SK-N-SH (cell line): ENCODE measurements at regions of chr7 and their contacts with region 1.

Region 1: GRCh38 chr7:73726083-73726466 is 6.6 kb upstream of the STX1A start:
- DNase-seq: no peak
- H3K4me3 ChIP-seq: no peak overlapping the region
- H3K27ac ChIP-seq: no peak overlapping the region
- H3K4me1 ChIP-seq: peaks cover 5 to 8% of the 10 kb centered on the region in 2 experiments; a peak in 2 of 4 replicates
- H3K27me3 ChIP-seq: no peaks in the 10 kb centered on the region
- CTCF ChIP-seq: no peak
- EP300 ChIP-seq: no peak
- RAD21 ChIP-seq: no peak

Region 2: DNA sequence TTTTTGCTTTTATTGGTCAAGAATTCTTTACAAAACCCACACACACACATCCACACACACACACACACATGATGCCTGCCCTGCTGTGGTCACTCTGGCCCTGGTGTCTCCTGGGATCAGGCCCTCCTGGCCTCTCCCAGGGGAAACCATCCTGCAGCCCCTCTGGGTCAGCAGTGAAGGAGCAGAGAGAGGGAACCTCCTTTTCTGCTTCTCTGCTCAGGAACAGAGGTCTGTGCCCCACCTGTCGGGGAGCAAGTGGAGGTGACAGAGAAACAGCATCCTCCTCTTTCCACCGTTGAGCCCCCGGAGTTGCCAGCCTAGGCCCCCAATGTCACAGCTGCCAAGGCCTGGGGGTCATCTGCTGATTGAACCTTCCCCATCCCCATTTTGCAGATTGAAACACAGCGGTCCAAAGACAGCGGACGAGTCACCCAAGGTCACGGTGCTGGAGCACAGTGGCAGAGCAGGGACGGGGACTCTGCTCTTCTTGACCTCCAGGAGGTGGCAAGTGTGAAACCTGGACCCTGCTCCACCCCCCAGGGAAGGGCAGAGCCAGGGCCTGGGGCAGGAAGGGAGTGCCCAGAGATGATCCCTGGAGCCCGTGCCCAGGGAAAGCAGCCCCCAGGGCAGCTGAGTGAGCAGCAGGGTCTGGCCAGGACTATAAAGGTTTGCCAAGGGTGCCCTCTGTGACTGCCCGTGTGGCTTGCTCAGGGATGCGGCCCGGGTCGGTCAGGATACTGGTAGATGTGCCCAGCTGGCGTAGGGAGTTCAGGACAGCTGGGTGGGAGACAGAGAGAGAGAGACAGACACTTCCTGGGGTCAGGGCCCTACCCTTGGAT is 132.6 kb before region 1 on chr7:
- CTCF ChIA-PET with region 1: interaction called, 24 read pairs
- POLR2A ChIA-PET with region 1: no interaction called
- DNase-seq: no peak
- H3K4me3 ChIP-seq: no peak overlapping the region
- H3K27ac ChIP-seq: no peak overlapping the region
- H3K4me1 ChIP-seq: no peaks in the 10 kb centered on the region
- H3K27me3 ChIP-seq: peaks cover 4% of the 10 kb centered on the region; the same call in 1 of the 2 replicates
- CTCF ChIP-seq: no peak
- EP300 ChIP-seq: no peak
- RAD21 ChIP-seq: no peak

Region 3: DNA sequence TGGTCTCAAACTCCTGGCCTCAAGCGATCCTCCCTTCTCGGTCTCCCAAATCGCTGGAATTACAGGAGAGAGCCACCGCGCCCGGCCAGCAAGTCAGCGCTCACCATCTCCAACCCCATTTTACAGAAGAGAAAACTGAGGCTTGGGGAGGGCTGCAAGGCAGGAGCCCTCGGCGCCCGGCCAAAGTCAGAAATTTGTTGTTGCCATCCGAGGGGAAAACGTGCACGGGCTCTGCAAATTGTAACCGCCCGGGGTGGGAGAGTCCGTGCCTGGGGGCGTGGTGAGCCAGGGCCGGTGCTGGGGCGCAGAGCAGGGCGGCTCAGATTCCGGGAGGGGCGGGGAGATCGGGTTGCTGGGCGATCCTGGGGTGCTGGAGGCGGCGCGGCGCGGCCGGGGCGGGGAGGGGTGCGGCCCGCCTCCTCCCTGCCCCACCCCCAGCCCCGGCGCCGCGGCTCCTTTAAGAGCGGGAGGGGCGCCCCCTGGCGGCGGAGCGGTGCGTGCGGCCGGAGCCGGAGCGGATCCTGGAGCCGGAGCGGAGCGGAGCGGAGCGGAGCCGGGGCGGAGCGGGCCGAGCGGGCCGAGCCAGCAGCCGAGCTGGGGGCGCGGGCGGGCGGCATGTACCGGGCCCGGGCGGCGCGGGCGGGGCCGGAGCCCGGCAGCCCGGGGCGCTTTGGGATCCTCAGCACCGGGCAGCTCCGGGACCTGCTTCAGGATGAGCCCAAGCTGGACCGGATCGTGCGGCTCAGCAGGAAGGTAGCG is 58.6 kb before region 1 on chr7 and contains the start of gene VPS37D:
- CTCF ChIA-PET with region 1: interaction called, 13 read pairs
- POLR2A ChIA-PET with region 1: interaction called, 4 read pairs
- DNase-seq: peak; percentile 100
- H3K4me3 ChIP-seq: peak within 1 kb of the TSS; percentile 70 to 75
- H3K27ac ChIP-seq: peak within 1 kb of the TSS in 1 of 2 experiments; percentile 22; a peak in 1 of 4 replicates
- H3K4me1 ChIP-seq: peaks cover 0 to 8% of the 10 kb centered on the region in 2 experiments; a peak in 1 of 4 replicates
- H3K27me3 ChIP-seq: 0 out of 2 replicates have a peak, but pooled peaks cover 6% of the 10 kb centered on the region
- CTCF ChIP-seq: peak; percentile 70
- EP300 ChIP-seq: peak in 1 of 2 experiments; percentile 27; a peak in 2 of 4 replicates
- RAD21 ChIP-seq: peak; percentile 64
- polyA plus RNA-seq, gene VPS37D: 5.7 and 7.4 TPM in 2 replicates

Region 4: GRCh38 chr7:73701357-73701995 is 24.6 kb before region 1 on chr7:
- CTCF ChIA-PET with region 1: interaction called, 34 read pairs
- POLR2A ChIA-PET with region 1: no interaction called
- DNase-seq: peak; percentile 92
- H3K4me3 ChIP-seq: no peak overlapping the region
- H3K27ac ChIP-seq: no peak overlapping the region; a peak in 1 of 4 replicates
- H3K4me1 ChIP-seq: peaks cover 0 to 25% of the 10 kb centered on the region in 2 experiments; a peak in 3 of 4 replicates
- H3K27me3 ChIP-seq: no peaks in the 10 kb centered on the region
- CTCF ChIP-seq: peak; percentile 83
- EP300 ChIP-seq: no peak
- RAD21 ChIP-seq: peak; percentile 53

Region 5: DNA sequence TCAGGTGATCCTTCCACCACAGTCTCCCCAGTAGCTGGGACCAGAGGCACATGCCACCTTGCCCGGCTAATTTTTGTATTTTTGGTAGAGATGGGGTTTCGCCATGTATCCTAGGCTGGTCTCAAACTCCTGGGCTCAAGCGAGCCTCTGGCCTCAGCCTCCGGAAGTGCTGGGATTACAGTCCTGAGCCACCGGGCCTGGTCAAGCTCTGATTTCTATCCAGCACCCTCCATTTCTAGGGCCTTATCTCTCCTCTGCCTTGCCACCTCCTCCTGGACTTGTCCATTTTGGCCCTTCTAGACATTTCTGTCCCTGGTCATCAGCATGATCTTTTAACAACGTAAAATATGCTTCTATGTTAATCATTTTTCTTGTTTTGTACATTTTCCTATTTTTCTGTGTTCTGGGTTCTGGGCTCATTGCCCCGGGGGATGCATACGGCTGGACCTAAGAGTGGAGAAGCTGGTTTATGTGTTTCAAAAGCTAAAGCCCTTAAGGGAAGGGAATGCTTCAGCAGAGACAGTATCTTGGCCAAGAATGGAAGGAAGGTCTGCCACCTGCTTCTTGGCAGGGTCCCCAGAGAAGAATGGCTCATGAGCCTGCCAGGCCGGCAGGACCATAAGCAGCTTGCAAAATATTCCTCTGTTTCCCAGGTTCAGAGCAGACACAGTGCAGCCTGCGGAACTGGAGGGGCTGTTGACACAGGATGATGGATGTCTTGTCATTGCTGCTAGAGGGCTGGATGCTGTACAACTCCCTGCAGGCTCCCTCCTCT is 20.1 kb after region 1 on chr7:
- CTCF ChIA-PET with region 1: interaction called, 89 read pairs
- POLR2A ChIA-PET with region 1: no interaction called
- DNase-seq: no peak
- H3K4me3 ChIP-seq: no peak overlapping the region
- H3K27ac ChIP-seq: peak overlapping the region in 1 of 2 experiments; percentile 4; a peak in 1 of 4 replicates
- H3K4me1 ChIP-seq: peaks cover 0 to 7% of the 10 kb centered on the region in 2 experiments; a peak in 1 of 4 replicates
- H3K27me3 ChIP-seq: no peaks in the 10 kb centered on the region
- CTCF ChIP-seq: no peak
- EP300 ChIP-seq: no peak
- RAD21 ChIP-seq: no peak